ENCODE measurements at regions of chrX and their contacts with region 1.

Region 1: GRCh38 chrX:78333521-78333920 is 6.1 kb upstream of the CYSLTR1 start:
- DNase-seq: peak in 4 of 14 experiments; percentile 8 to 84 (median 74)
- ATAC-seq: peak; percentile 86
- H3K4me3 ChIP-seq: no peak overlapping the region
- H3K4me3 Mint-ChIP-seq: peak overlapping the region; percentile 40
- H3K27ac ChIP-seq: peak overlapping the region; percentile 43 to 80
- H3K27ac Mint-ChIP-seq: peak overlapping the region; percentile 87
- H3K4me1 ChIP-seq: peaks cover 18% of the 10 kb centered on the region
- H3K4me1 Mint-ChIP-seq: peaks cover 82% of the 10 kb centered on the region
- H3K27me3 ChIP-seq: no peaks in the 10 kb centered on the region
- H3K27me3 Mint-ChIP-seq: no peaks in the 10 kb centered on the region
- CTCF ChIP-seq: no peak

Region 2: GRCh38 chrX:78139160-78140123 is 194.1 kb before region 1 on chrX and contains the start of gene TAF9B:
- CTCF ChIA-PET with region 1: no interaction called
- POLR2A ChIA-PET with region 1: no interaction called
- intact Hi-C with region 1: loop called in 1 of 2 experiments (anchors 10 kb)
- DNase-seq: peak; percentile 68 to 92 (median 78)
- ATAC-seq: peak; percentile 99
- H3K4me3 ChIP-seq: peak within 1 kb of the TSS; percentile 93
- H3K4me3 Mint-ChIP-seq: peak within 1 kb of the TSS; percentile 96
- H3K27ac ChIP-seq: peak within 1 kb of the TSS; percentile 65 to 77
- H3K27ac Mint-ChIP-seq: peak within 1 kb of the TSS; percentile 94
- H3K4me1 ChIP-seq: peaks cover 11% of the 10 kb centered on the region
- H3K4me1 Mint-ChIP-seq: peaks cover 21% of the 10 kb centered on the region
- H3K27me3 ChIP-seq: no peaks in the 10 kb centered on the region
- H3K27me3 Mint-ChIP-seq: no peaks in the 10 kb centered on the region
- CTCF ChIP-seq: no peak
- total RNA-seq, gene TAF9B: 9.6 to 10.3 TPM